BJ (cell line): ENCODE measurements at regions of chr20 and their contacts with region 1.

Region 1: GRCh38 chr20:50790651-50791277 is 4.1 kb upstream of the BCAS4 start:
- DNase-seq: peak; percentile 46
- H3K4me3 ChIP-seq: no peak overlapping the region
- H3K27me3 ChIP-seq: no peaks in the 10 kb centered on the region
- CTCF ChIP-seq: peak; percentile 97

Region 2: DNA sequence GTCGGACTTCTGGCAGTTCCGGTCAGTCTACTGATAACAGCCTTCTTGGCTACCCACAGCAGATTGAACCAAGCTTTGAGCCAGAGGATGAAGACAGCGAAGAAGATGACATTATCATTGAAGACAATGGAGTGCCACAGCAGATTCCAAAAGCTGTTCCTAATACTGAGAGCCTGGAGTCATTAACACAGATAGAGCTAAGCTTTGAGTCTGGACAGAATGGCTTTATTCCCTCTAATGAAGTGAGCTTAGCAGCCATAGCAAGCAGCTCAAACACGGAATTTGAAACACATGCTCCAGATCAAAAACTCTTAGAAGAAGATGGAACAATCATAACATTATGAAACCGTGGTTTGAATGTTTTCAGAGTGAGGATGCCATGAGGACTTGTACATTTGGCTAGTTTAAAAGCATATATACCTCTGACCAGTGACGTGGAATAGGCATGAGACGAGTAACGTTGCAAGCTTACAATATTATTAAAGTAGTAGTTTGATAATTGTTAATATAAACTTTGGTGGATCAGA is 40.6 kb before region 1 on chr20:
- CTCF ChIA-PET with region 1: interaction called, 11 read pairs
- POLR2A ChIA-PET with region 1: no interaction called
- DNase-seq: no peak
- H3K4me3 ChIP-seq: no peak overlapping the region
- H3K27me3 ChIP-seq: no peaks in the 10 kb centered on the region
- CTCF ChIP-seq: no peak

Region 3: DNA sequence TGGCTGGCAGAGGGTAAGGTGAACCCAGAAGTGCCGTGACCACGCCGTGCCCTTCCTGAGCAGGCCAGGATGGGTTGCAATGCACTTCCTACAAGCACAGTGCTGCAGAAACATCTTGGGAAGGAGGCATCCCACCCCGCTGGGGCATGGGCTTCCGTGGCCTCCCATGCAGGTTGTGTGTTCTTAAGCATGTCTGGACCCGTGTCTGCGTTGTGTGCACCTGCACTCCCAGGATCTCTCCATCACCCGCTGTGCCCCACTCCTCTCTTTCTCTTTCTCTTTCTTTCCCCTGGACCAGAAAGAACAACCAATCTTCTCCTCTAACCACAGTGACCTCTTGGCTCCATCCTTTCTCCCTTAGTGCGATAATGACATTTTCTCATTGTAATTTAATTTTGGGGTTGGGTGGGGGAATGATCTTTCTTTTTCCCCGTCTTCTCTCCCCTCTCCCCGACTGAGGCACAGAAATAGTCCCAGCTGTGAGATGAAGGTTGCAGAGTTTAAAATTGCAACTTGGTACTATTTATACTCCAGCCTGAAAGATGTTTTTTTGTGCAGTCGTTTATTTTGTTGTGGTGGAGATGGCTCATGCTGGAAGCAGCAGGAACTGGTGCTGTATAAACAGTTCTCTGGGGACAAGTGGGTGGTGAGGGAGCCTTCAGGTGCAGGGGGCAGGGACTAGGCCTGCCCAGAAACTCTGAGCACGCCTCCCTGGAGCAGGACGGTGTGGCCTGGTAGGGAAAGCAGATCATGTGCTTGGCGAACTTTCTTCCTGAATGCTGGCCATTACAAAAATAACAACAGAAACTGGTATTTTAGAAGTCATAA is 24.6 kb after region 1 on chr20:
- CTCF ChIA-PET with region 1: interaction called, 11 read pairs
- POLR2A ChIA-PET with region 1: interaction called, 7 read pairs
- DNase-seq: no peak
- H3K4me3 ChIP-seq: no peak overlapping the region
- H3K27me3 ChIP-seq: no peaks in the 10 kb centered on the region
- CTCF ChIP-seq: no peak

Region 4: DNA sequence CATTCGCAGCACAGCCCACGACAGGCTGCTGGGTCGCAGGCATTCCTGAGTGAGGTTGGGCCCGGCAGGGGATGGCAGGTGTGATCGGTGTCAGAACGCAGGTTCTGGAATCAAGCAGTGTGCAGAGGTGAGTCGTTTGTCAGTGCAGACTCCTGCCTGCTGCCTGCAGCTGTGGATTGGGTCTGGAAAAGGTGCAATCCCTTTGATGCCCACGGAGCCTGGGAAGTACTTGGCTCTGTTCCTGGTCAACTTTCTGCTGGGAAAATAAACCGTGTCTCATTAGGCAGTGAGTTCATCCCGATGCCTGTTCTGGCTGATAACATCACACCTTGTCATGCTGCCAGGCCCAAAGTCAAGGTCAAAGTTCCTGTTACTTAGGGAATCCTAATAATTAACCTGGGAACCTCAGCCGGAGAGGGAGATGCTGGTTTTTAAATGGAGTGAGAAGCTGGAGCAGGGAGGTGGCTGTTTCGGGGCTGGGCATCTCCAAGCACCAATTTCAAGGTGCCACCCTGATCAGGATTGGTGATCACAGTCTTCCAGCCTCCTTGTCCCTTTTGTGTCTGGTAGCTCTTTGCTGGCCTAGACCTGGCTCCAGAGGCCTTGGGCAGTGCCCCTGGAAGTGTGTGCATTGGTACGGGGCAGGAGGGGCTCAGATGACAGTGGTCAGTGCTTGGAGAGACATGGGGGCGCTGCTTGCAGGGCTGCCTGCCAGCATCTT is 65.4 kb after region 1 on chr20:
- CTCF ChIA-PET with region 1: no interaction called
- POLR2A ChIA-PET with region 1: no interaction called
- DNase-seq: no peak
- H3K4me3 ChIP-seq: no peak overlapping the region
- H3K27me3 ChIP-seq: no peaks in the 10 kb centered on the region
- CTCF ChIP-seq: no peak

Region 5: DNA sequence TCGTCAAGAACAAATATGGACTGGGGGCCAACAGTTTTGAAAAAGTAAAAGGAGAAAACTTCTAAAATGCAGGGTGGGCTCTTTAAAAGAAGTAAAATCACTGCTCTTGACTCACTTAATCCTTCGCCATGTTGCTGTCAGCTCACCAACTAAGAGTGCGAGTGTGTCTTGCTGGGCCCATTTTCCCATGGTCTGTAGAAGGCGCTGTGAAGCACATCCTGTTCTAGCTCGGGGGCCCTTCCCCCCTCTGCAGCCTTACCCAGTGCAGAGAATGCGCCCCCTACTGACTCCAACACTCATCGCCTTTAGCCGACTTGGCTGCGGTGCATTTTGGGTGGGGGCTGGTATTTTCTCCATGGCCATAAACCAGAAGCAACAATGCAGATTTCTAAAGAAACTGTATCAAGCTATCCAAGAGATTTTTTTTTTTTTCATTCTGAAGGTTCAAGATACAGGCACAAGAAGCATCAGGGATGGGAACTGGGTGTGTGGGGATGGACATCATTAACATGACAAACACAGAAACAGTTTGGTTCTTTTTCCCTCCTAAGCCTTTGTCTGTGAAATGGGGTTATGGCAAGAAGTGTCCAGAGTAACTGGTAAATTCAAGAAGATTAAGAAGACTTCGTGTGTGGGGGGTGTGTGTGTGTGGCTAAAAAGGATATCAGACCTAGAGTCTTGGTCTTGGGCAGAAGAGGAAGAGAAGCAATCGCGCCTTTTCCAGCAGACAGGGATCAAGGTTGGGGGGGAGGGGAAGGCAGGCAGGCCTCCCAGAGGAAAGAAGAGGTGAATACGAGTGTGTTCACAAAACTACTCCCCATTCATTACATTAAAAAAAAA is 138.8 kb after region 1 on chr20:
- CTCF ChIA-PET with region 1: interaction called, 152 read pairs
- POLR2A ChIA-PET with region 1: interaction called, 3 read pairs
- DNase-seq: peak; percentile 70
- H3K4me3 ChIP-seq: peak overlapping the region; percentile 93
- H3K27me3 ChIP-seq: no peaks in the 10 kb centered on the region
- CTCF ChIP-seq: peak; percentile 99

Region 6: GRCh38 chr20:50980851-50981713 is 190.3 kb after region 1 on chr20:
- CTCF ChIA-PET with region 1: interaction called, 66 read pairs
- POLR2A ChIA-PET with region 1: no interaction called
- DNase-seq: no peak
- H3K4me3 ChIP-seq: no peak overlapping the region
- H3K27me3 ChIP-seq: no peaks in the 10 kb centered on the region
- CTCF ChIP-seq: peak; percentile 79